ENCODE measurements at regions of chr18 and their contacts with region 1.

Region 1: GRCh38 chr18:51051105-51051712 is 21.2 kb downstream of the SMAD4 start:
- DNase-seq: no peak
- ATAC-seq: peak; percentile 86
- H3K4me3 Mint-ChIP-seq: no peak overlapping the region
- H3K27ac Mint-ChIP-seq: peak overlapping the region; percentile 15
- H3K4me1 Mint-ChIP-seq: peaks cover 20% of the 10 kb centered on the region
- H3K27me3 Mint-ChIP-seq: no peaks in the 10 kb centered on the region
- CTCF ChIP-seq: peak; percentile 70

Region 2: DNA sequence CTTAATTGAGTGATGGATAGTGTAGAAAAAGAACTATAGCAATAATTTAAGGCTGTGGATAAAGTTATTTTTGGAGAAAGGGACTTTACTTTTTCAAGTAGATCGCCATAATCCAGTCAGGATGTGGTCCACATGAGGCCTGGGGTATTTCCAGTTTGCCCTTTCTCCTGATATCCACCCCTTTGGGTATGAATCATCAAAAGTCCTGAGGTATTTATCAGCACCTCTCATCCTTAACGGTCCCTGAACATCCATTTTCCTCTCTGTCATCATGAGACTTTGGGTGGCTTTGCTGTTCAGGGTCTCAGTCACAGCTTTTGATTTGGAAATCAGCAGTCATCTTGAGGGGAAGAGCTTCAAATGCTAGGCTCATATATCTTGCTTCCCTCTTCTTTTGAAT is 122.7 kb before region 1 on chr18:
- CTCF ChIA-PET with region 1: no interaction called
- POLR2A ChIA-PET with region 1: no interaction called
- intact Hi-C with region 1: no loop called
- DNase-seq: no peak
- ATAC-seq: no peak
- H3K4me3 Mint-ChIP-seq: no peak overlapping the region
- H3K27ac Mint-ChIP-seq: no peak overlapping the region
- H3K4me1 Mint-ChIP-seq: no peaks in the 10 kb centered on the region
- H3K27me3 Mint-ChIP-seq: no peaks in the 10 kb centered on the region
- CTCF ChIP-seq: no peak

Region 3: GRCh38 chr18:51039138-51040112 is 11.8 kb before region 1 on chr18:
- CTCF ChIA-PET with region 1: interaction called, 12 read pairs
- POLR2A ChIA-PET with region 1: no interaction called
- intact Hi-C with region 1: no loop called
- DNase-seq: no peak
- ATAC-seq: no peak
- H3K4me3 Mint-ChIP-seq: no peak overlapping the region
- H3K27ac Mint-ChIP-seq: peak overlapping the region; percentile 31
- H3K4me1 Mint-ChIP-seq: peaks cover 83% of the 10 kb centered on the region
- H3K27me3 Mint-ChIP-seq: no peaks in the 10 kb centered on the region
- CTCF ChIP-seq: no peak

Region 4: DNA sequence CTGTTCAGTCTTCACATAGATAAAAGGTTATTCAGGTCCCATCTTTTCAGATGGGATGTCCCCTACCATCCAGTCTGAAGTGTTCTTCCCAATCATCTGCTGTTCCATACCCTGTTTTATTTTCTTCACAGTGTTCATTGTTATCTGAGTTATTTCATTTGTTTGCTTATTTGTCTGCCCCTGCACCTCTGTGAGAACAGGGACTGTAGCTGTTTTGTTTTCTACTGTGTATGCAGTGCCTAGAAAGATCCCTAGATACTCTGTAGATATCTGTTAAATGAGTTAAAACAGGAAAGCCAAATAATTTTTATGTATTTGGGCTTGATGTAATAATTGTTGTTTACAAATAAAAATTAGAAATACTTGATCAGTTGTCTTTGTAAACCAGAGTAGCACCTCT is 13.0 kb after region 1 on chr18:
- CTCF ChIA-PET with region 1: interaction called, 8 read pairs
- POLR2A ChIA-PET with region 1: no interaction called
- intact Hi-C with region 1: loop called (anchors 2 kb)
- DNase-seq: no peak
- ATAC-seq: no peak
- H3K4me3 Mint-ChIP-seq: no peak overlapping the region
- H3K27ac Mint-ChIP-seq: no peak overlapping the region
- H3K4me1 Mint-ChIP-seq: no peaks in the 10 kb centered on the region
- H3K27me3 Mint-ChIP-seq: no peaks in the 10 kb centered on the region
- CTCF ChIP-seq: no peak